Activated CD8-positive, alpha-beta T cell treated with anti-CD3 and anti-CD28 coated beads for 36 hours (primary cell): ENCODE measurements at regions of chr20 and their contacts with region 1.

Region 1: DNA sequence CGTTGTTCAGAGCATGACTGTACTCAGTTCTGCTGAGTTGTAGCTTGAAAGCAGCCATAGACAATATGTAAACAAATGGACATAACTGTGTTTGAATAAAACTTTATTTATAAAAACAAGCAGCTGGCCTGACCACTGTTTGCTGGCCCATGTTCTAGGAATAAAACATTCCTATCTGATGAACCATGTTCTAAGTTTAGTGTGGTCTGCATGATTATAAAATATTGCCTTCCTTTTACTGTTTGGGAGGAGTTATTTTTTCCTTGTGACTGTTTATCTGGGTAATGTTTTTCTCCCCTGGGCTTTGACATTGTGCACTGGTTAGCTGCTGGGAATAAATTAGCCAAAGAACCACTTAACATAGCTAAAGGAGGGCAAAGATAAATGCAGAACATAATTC is 55.1 kb downstream of the CDS2 start:
- DNase-seq: no peak
- ATAC-seq: no peak
- H3K4me3 Mint-ChIP-seq: no peak overlapping the region
- H3K27ac Mint-ChIP-seq: no peak overlapping the region
- H3K4me1 Mint-ChIP-seq: peaks cover 4% of the 10 kb centered on the region
- H3K27me3 Mint-ChIP-seq: no peaks in the 10 kb centered on the region
- CTCF ChIP-seq: no peak

Region 2: DNA sequence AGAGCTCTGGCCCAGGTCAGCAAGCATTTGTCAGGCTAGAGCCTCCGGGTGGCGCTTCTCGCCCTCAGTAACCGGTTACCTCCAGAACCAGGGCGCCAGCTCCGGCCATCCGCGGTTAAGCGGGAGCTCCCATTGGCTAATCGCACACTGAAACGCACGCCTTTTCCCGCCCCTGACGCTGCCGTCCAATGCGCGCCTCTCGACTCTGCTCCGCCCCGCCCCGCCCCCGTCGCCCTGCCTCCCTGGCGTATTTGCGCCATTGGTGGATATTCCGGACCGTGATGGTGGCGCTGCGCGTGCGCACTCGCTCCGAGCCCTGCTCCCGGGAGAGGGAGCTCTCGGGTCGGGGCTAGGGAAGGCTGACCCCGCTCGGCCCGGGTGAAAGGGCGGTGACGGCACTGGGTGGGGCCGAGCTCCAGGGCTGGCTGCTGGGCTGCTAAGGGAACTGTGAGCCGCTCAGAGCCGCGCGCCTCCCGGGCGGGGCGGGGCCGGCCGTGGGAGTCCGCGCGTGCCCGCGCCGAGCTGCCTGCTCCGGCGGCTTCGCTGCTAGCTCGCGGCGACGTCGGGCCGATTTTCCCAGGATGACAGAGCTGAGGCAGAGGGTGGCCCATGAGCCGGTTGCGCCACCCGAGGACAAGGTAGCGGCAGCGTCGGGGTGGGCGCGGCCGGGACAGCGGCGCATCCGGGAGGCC is 55.3 kb before region 1 on chr20 and contains the start of gene CDS2:
- CTCF ChIA-PET with region 1: interaction called, 23 read pairs
- POLR2A ChIA-PET with region 1: no interaction called
- intact Hi-C with region 1: no loop called
- DNase-seq: peak; percentile 100
- ATAC-seq: peak; percentile 86
- H3K4me3 Mint-ChIP-seq: peak within 1 kb of the TSS; percentile 88
- H3K27ac Mint-ChIP-seq: peak within 1 kb of the TSS; percentile 97
- H3K4me1 Mint-ChIP-seq: peaks cover 36% of the 10 kb centered on the region
- H3K27me3 Mint-ChIP-seq: no peaks in the 10 kb centered on the region
- CTCF ChIP-seq: peak; percentile 51
- total RNA-seq, gene CDS2: 30.2 to 34.7 TPM

Region 3: GRCh38 chr20:5205348-5206210 is 23.6 kb after region 1 on chr20:
- CTCF ChIA-PET with region 1: interaction called, 11 read pairs
- POLR2A ChIA-PET with region 1: no interaction called
- intact Hi-C with region 1: no loop called
- DNase-seq: peak; percentile 81
- ATAC-seq: peak; percentile 99
- H3K4me3 Mint-ChIP-seq: no peak overlapping the region
- H3K27ac Mint-ChIP-seq: no peak overlapping the region
- H3K4me1 Mint-ChIP-seq: no peaks in the 10 kb centered on the region
- H3K27me3 Mint-ChIP-seq: no peaks in the 10 kb centered on the region
- CTCF ChIP-seq: peak; percentile 95